ENCODE measurements at regions of chr2 and their contacts with region 1.

Region 1: DNA sequence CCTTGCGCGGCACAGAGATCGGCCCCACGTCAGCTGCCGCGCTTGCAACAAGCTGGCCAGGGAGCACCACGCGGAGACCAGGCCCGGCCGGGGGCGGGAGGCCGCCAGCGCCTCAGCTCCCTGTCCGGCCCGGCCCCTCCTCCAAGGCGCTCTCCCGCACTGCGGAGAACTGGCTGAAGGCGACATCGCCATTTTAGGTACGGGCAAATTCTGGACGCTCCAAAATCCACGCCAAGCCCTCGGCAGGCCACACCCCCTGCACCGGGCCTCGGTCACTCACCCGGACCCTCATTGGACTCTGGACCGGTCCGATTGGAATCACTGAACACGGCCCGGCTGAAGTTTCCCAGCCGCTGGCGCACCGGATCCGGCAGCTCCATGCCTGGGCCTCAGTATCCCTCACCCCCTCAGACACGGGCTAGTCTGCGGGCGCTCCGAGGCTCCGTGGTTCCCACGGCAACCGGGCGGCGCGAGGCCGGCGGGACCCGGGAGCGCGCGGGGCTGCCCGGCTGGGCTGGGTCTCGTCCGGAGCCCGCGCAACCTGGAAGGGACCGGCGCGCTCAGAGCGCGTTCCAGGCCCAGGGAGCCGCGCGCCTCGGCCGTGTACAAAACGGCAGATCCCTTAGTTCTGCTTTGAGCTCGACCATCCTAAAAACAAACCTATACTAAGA is at the start of gene TMEM17:
- DNase-seq: peak; percentile 95
- ATAC-seq: peak; percentile 98
- total RNA-seq, gene TMEM17: 1.7 TPM

Region 2: GRCh38 chr2:62705007-62705829 is 199.3 kb after region 1 on chr2 and contains the start of gene EHBP1:
- intact Hi-C with region 1: loop called (anchors 10 kb)
- DNase-seq: peak; percentile 99
- ATAC-seq: peak; percentile 99
- total RNA-seq, gene EHBP1: 26.1 TPM